GM12878 (cell line): ENCODE measurements at regions of chr4 and their contacts with region 1.

Region 1: DNA sequence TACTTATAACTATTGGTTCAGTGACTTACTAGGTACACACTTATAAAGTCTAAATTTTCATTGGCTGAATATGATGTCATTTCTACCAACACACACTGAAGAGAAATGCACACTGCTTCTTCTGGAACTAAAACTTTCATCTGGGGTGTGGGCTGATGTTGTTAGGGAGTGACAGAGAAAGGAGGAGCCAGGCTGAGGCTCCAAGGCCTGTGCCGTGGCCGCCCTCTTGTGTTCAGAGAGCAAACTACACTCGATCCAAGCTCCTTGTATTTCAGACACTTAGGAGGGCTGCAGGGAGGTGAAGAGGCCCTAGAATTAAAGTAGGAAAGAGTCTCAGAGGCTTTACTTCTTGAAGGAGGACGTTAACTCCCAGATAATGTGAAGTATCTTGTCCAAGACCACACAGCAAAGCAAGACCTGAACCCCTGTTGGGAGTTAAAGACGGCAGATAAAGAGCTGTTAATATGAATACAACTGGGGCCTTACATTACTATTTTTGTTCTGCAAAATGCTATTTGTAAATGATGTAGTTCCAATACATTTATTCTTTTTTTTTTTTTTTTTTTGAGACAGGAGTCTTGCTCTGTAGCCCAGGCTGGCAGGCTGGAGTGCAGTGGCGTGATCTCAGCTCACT is 137.5 kb downstream of the AFAP1 start:
- DNase-seq: no peak
- ATAC-seq: peak; percentile 96
- H3K4me3 ChIP-seq: no peak overlapping the region
- H3K27ac ChIP-seq: no peak overlapping the region
- H3K4me1 ChIP-seq: no peaks in the 10 kb centered on the region
- H3K27me3 ChIP-seq: 0 out of 4 replicates have a peak, but pooled peaks cover 0 to 3% of the 10 kb centered on the region in 2 experiments
- CTCF ChIP-seq: peak; percentile 91 to 95 (median 91)
- EP300 ChIP-seq: no peak
- POLR2A ChIP-seq: no peak
- RAD21 ChIP-seq: peak; percentile 98

Region 2: GRCh38 chr4:7192252-7193029 is 609.8 kb before region 1 on chr4 and contains the start of gene SORCS2:
- CTCF ChIA-PET with region 1: interaction called, 3 read pairs
- POLR2A ChIA-PET with region 1: no interaction called
- RAD21 ChIA-PET with region 1: interaction called, 3 read pairs
- SMC1A ChIA-PET with region 1: no interaction called
- in situ Hi-C with region 1: no loop called
- intact Hi-C with region 1: loop called (anchors 5 kb)
- DNase-seq: no peak
- ATAC-seq: peak; percentile 91
- H3K4me3 ChIP-seq: no peak within 1 kb of the TSS
- H3K27ac ChIP-seq: no peak within 1 kb of the TSS
- H3K4me1 ChIP-seq: no peaks in the 10 kb centered on the region
- H3K27me3 ChIP-seq: peaks cover 2 to 4% of the 10 kb centered on the region in 2 experiments; a peak in 3 of 4 replicates
- CTCF ChIP-seq: peak; percentile 24 to 59 (median 48); a peak in 3 of 6 replicates
- EP300 ChIP-seq: no peak
- POLR2A ChIP-seq: no peak
- RAD21 ChIP-seq: peak; percentile 49
- polyA plus RNA-seq, gene SORCS2: not detected

Region 3: DNA sequence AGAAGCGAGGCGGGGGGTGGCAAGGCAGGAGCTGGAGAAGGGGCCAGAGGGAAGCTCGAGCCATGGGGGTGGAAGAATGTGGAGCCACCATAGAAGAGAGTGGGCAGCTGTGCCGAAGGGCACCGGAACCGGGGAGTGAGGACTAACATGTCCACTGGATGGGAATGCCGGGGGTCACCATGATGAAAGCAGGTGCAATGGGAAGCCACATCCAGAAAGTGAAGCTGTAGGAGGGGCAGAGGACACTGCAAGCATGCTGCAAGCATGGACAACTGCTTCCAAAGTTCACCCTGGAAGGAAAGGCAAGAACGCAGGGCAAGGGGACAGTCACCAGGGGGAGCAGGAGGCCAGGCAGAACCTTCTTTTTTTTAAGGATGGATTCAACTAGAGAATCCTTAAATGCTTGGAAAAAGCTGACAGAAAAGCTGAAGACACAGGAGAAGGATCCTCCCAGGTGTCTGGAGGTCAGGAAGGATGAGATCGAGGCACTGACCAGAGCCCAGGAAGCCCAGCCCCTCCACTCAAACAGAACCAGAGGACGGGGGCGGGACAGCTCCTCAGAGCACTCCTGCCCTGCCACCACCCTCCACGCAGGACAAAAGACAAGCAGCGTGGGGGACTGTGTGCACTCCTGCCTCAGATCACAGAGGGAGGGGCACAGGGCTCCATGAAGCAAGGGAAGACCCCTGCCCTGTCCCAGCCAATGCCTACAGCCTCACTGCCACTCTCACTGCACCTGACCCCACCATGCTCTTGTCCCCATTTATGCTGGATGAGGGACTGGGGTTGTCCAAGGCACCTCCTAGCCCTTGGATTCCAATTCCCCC is 31.8 kb before region 1 on chr4:
- CTCF ChIA-PET with region 1: interaction called, 7 read pairs
- POLR2A ChIA-PET with region 1: no interaction called
- RAD21 ChIA-PET with region 1: no interaction called
- SMC1A ChIA-PET with region 1: interaction called, 3 read pairs
- in situ Hi-C with region 1: loop called (anchors 5 kb)
- intact Hi-C with region 1: loop called (anchors 1 kb)
- DNase-seq: no peak
- ATAC-seq: no peak
- H3K4me3 ChIP-seq: no peak overlapping the region
- H3K27ac ChIP-seq: no peak overlapping the region
- H3K4me1 ChIP-seq: peaks cover 23% of the 10 kb centered on the region
- H3K27me3 ChIP-seq: peaks cover 0 to 3% of the 10 kb centered on the region in 2 experiments; a peak in 2 of 4 replicates
- CTCF ChIP-seq: peak; percentile 37 to 63 (median 61); a peak in 5 of 6 replicates
- EP300 ChIP-seq: no peak
- POLR2A ChIP-seq: no peak
- RAD21 ChIP-seq: peak; percentile 79

Region 4: DNA sequence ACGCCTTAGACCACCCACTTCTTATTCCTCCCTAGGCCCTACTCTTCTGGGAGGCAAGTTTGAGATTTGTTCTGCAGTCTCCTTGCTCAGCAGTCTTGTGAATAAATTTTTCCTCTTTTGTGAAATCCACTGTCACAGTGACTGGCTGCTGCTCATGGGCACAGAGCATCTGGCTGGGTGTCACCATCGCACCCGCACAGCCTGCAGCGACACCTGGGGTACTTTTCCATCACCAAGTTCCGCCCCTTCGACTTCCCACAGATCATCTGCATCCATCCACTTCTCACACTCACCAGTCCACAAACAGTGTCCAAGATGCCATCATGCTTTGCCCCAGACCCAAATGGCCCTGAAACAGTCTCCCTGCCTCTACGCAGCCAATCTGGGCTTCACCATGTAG is 173.8 kb after region 1 on chr4:
- CTCF ChIA-PET with region 1: interaction called, 10 read pairs
- POLR2A ChIA-PET with region 1: no interaction called
- RAD21 ChIA-PET with region 1: no interaction called
- SMC1A ChIA-PET with region 1: interaction called, 4 read pairs
- in situ Hi-C with region 1: no loop called
- intact Hi-C with region 1: no loop called
- DNase-seq: no peak
- ATAC-seq: no peak
- H3K4me3 ChIP-seq: no peak overlapping the region
- H3K27ac ChIP-seq: no peak overlapping the region
- H3K4me1 ChIP-seq: peaks cover 6% of the 10 kb centered on the region; the same call in 1 of the 2 replicates
- H3K27me3 ChIP-seq: no peaks in the 10 kb centered on the region; a peak in 1 of 4 replicates
- CTCF ChIP-seq: no peak
- EP300 ChIP-seq: no peak
- POLR2A ChIP-seq: no peak
- RAD21 ChIP-seq: no peak

Region 5: DNA sequence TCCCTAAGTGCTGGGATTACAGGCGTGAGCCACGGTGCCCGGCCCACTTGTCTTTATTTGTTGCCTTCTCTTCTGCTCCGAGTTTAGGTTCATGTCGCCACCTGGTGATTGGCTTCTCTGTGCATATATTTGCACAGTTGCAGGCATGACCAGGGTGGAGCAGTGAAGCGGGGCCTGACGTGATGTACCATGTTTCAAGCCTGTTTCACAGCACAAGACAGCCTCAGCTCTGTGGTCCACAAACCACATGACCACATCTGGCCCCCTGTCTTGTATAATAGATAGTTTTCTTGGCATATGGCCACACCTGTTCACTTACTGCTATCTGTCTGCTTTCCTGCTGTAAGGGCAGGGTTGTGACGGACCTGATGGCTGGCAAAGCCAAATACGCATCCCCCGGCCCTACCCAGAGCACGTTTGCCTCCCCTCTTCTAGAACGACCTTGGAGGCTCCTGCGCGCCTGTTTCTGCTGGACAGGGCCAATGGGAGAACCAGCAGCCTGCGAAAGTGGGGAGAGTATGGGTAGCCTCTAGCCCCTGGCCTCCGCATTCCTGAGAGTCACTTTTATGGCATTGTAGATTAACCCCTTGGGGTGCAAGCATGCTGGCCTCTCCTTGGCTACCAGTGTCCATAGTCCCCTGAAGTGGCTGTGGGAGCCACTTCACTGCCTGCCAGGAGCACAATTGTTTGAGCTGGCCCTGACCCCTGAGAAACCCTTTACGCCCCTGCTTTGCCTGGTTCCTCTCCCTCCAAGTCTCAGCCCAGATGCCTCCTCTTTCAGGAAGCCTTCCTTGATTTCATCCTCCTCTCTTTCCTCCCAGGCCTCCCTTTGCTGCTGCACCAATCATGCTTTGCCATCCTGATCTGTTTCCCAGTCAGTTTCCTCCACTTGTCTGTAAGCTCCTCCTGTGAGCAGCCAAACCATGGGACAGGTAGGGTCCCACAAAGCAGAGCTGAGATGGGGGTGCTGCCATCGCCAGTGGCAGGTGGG is 390.8 kb after region 1 on chr4:
- CTCF ChIA-PET with region 1: interaction called, 10 read pairs
- POLR2A ChIA-PET with region 1: no interaction called
- RAD21 ChIA-PET with region 1: interaction called, 3 read pairs
- SMC1A ChIA-PET with region 1: no interaction called
- in situ Hi-C with region 1: no loop called
- intact Hi-C with region 1: loop called (anchors 2 kb)
- DNase-seq: peak; percentile 78
- ATAC-seq: peak; percentile 93
- H3K4me3 ChIP-seq: no peak overlapping the region
- H3K27ac ChIP-seq: no peak overlapping the region
- H3K4me1 ChIP-seq: peaks cover 16% of the 10 kb centered on the region
- H3K27me3 ChIP-seq: no peaks in the 10 kb centered on the region
- CTCF ChIP-seq: peak; percentile 37 to 72 (median 48); a peak in 5 of 6 replicates
- EP300 ChIP-seq: peak; percentile 35 to 51; a peak in 2 of 4 replicates
- POLR2A ChIP-seq: no peak
- RAD21 ChIP-seq: peak; percentile 79